ENCODE measurements at regions of chr10 and their contacts with region 1.

Region 1: DNA sequence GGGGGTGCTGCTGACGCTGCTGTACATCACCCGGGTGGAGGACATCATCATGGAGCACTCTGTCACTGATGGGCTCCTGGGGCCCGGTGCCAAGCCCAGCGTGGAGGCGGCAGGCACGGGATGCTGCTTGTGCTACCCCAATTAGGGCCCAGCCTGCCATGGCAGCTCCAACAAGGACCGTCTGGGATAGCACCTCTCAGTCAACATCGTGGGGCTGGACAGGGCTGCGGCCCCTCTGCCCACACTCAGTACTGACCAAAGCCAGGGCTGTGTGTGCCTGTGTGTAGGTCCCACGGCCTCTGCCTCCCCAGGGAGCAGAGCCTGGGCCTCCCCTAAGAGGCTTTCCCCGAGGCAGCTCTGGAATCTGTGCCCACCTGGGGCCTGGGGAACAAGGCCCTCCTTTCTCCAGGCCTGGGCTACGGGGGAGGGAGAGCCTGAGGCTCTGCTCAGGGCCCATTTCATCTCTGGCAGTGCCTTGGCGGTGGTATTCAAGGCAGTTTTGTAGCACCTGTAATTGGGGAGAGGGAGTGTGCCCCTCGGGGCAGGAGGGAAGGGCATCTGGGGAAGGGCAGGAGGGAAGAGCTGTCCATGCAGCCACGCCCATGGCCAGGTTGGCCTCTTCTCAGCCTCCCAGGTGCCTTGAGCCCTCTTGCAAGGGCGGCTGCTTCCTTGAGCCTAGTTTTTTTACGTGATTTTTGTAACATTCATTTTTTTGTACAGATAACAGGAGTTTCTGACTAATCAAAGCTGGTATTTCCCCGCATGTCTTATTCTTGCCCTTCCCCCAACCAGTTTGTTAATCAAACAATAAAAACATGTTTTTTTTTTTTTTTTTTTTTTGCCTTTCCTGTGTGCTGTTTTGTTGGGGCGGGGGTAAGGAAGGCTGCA is 55.8 kb downstream of the TSPAN15 start:
- DNase-seq: peak; percentile 76

Region 2: GRCh38 chr10:69425511-69426298 is 81.4 kb before region 1 on chr10:
- intact Hi-C with region 1: loop called (anchors 5 kb)
- DNase-seq: no peak

Region 3: GRCh38 chr10:69451209-69451783 is 55.8 kb before region 1 on chr10 and contains the start of gene TSPAN15:
- intact Hi-C with region 1: loop called in 1 of 2 experiments (anchors 5 kb)
- DNase-seq: peak; percentile 95
- total RNA-seq, gene TSPAN15: 44.6 to 45.6 TPM

Measured in posterior vena cava (tissue), 2 donors.